Transverse colon (tissue), 4 donors: ENCODE measurements at regions of chr19 and their contacts with region 1.

Region 1: GRCh38 chr19:44570984-44571684 is 41.7 kb upstream of the CEACAM20 start:
- DNase-seq: peak; percentile 67
- H3K4me3 ChIP-seq: no peak overlapping the region
- H3K27ac ChIP-seq: no peak overlapping the region
- H3K4me1 ChIP-seq: peaks cover 0 to 3% (median 0%) of the 10 kb centered on the region in 4 donors
- H3K27me3 ChIP-seq: peaks cover 31% of the 10 kb centered on the region
- CTCF ChIP-seq: peak; percentile 68 to 76 (median 73)
- EP300 ChIP-seq: no peak
- POLR2A ChIP-seq: no peak

Region 2: DNA sequence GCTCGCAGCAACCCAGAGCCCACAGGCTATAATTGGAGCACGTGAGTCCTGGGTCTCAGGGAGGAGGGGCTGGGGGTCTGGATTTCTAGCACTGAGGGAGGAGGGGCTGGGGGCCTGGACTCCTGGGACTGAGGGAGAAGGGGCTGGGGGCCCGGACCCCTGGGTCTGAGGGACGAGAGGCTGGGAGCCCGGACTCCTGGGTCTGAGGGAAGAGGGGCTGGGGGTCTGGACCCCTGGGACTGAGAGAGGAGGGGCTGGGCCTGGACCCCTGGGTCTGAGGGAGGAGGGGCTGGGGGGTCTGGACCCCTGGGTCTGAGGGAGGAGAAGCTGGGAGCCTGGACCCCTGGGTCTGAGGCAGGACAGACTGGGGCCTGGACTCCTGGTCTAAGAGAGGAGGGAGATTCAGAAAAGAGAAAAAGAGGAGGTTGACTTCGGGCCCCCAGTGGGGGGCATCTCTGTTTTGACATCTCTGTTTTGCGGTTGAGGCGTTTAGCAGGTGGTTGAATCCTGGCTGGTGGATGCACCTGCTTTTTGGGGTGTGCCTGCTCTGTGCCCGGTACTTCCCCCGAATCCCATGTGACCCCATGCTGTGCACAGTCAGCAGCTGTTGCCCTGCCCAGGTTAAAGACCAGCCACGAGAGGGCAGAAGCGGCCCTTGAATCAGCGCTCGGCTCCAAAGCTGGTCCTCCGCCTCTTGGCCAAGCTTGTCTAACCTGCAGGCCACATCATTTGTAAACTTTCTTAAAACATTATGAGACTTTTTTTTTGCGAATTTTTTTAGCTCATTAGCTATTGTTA is 83.0 kb after region 1 on chr19:
- in situ Hi-C with region 1: loop called in 3 of 4 experiments (anchors 5 to 10 kb)
- intact Hi-C with region 1: loop called (anchors 2 kb)
- DNase-seq: peak; percentile 81
- H3K4me3 ChIP-seq: no peak overlapping the region
- H3K27ac ChIP-seq: no peak overlapping the region
- H3K4me1 ChIP-seq: peaks cover 0 to 2% (median under 1%) of the 10 kb centered on the region in 4 donors
- H3K27me3 ChIP-seq: no peaks in the 10 kb centered on the region
- CTCF ChIP-seq: peak; percentile 38 to 71 (median 62)
- EP300 ChIP-seq: no peak
- POLR2A ChIP-seq: no peak

Region 3: DNA sequence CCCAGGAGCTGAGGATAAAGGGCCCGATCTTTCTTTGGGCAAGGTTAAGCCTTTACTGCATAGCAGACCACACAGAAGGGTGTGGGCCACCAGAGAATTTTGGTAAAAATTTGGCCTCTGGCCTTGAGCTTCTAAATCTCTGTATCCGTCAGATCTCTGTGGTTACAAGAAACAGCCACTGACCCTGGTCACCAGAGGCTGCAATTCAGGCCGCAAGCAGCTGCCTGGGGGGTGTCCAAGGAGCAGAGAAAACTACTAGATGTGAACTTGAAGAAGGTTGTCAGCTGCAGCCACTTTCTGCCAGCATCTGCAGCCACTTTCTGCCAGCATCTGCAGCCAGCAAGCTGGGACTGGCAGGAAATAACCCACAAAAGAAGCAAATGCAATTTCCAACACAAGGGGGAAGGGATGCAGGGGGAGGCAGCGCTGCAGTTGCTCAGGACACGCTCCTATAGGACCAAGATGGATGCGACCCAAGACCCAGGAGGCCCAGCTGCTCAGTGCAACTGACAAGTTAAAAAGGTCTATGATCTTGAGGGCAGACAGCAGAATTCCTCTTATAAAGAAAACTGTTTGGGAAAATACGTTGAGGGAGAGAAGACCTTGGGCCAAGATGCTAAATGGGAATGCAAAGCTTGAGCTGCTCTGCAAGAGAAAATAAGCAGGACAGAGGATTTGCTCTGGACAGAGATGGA is 91.7 kb after region 1 on chr19:
- in situ Hi-C with region 1: loop called (anchors 5 to 10 kb)
- intact Hi-C with region 1: loop called (anchors 2 kb)
- DNase-seq: no peak
- H3K4me3 ChIP-seq: no peak overlapping the region
- H3K27ac ChIP-seq: no peak overlapping the region
- H3K4me1 ChIP-seq: no peaks in the 10 kb centered on the region
- H3K27me3 ChIP-seq: no peaks in the 10 kb centered on the region
- CTCF ChIP-seq: no peak
- EP300 ChIP-seq: no peak
- POLR2A ChIP-seq: no peak